Pancreas (tissue), 10 donors: ENCODE measurements at regions of chr14 and their contacts with region 1.

Region 1: DNA sequence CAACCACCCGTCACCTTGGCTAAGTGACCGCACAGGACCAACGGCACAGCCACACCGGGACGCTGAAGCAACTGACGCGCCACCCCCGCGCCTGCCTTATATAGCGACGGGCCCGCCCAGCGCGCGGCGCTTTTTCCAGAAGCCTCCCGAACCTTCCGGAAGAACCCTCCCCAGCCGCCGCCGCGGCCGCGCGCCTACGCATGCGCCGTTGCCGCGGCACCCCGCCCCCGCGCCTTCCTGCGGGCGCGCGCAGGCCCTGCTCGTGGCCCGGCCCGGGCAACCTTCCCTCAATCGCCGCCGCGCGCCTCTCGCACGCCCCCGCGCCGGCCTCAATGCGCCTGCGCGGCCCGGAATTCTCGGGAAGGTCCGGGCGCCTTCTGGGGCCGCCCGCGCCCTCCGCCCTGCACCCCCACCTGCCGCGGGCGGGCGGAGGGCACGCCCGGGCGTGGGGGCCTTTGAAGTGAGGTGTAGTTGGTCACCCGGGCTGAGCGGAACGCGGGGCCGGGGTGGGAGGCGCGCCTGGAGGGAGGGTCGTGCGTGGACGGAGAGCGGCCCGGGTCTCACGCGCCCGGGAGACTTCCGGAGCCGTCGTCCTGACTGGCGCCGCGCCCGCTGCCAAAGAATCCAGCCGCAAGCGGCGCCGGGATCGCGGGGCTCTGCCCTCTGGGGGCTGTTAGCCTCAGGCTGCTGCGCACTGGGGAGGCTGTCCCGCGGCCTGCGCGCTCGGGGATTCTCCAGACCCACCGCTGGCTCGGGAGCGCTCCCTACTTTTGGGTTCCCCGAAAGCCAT is at the start of gene HSP90AA1:
- DNase-seq: peak; percentile 91 to 100 (median 97)
- ATAC-seq: peak; percentile 46 to 93 (median 84)
- H3K4me3 ChIP-seq: peak within 1 kb of the TSS; percentile 51 to 93 (median 80)
- H3K27ac ChIP-seq: peak within 1 kb of the TSS; percentile 98 to 100 (median 100)
- H3K4me1 ChIP-seq: peaks cover 28 to 36% (median 33%) of the 10 kb centered on the region in 3 donors
- H3K27me3 ChIP-seq: no peaks in the 10 kb centered on the region
- CTCF ChIP-seq: no peak
- total RNA-seq, gene HSP90AA1: 106 to 393 (median 136) TPM

Region 2: GRCh38 chr14:101964297-101965144 is 122.6 kb before region 1 on chr14 and contains the start of gene DYNC1H1:
- intact Hi-C with region 1: loop called in 1 of 3 experiments (anchors 10 kb)
- DNase-seq: peak; percentile 84 to 96 (median 92)
- ATAC-seq: peak; percentile 91 to 94 (median 92)
- H3K4me3 ChIP-seq: peak within 1 kb of the TSS; percentile 85 to 100 (median 98)
- H3K27ac ChIP-seq: peak within 1 kb of the TSS; percentile 78 to 91 (median 90)
- H3K4me1 ChIP-seq: peaks cover 6 to 17% (median 12%) of the 10 kb centered on the region in 3 donors
- H3K27me3 ChIP-seq: no peaks in the 10 kb centered on the region
- CTCF ChIP-seq: no peak
- total RNA-seq, gene DYNC1H1: 114 to 215 (median 143) TPM

Region 3: DNA sequence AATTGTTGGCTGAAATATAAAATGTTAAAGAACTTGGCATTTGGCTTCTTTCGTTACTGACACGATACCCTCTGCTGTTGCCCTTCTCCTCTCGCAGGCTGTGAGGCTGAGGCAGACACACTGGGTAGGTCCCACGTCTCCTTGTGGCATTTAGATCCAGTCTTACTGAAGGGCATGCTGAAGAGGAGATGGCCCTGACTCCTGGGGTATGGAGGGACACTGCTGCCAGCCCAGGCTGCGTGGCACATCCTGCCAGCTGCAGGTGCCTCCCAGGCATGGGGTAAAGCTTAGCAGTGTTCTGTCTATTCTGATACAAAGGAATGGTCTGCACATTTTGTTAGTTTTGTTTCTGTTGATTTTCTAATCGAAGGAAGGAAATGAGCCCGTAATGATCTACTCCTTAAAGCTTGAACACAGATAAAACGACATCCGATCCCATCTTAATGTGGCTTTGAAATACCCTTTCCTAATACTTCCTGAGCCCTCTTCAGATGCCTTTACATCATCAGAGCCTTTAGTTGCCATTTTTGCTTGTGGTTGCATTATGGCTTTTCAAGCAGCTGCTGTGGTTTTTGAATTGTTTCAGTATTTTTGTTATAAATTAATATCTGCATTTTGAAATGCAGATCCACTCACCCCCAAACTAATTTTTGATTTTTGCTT is 113.7 kb after region 1 on chr14:
- intact Hi-C with region 1: no loop called
- DNase-seq: no peak
- ATAC-seq: no peak
- H3K4me3 ChIP-seq: no peak overlapping the region
- H3K27ac ChIP-seq: no peak overlapping the region
- H3K4me1 ChIP-seq: no peaks in the 10 kb centered on the region
- H3K27me3 ChIP-seq: no peaks in the 10 kb centered on the region
- CTCF ChIP-seq: no peak

Region 4: GRCh38 chr14:102255401-102256190 is 168.4 kb after region 1 on chr14:
- intact Hi-C with region 1: no loop called
- DNase-seq: no peak
- ATAC-seq: no peak
- H3K4me3 ChIP-seq: no peak overlapping the region
- H3K27ac ChIP-seq: no peak overlapping the region
- H3K4me1 ChIP-seq: peaks cover 0 to 13% (median 6%) of the 10 kb centered on the region in 3 donors
- H3K27me3 ChIP-seq: no peaks in the 10 kb centered on the region
- CTCF ChIP-seq: no peak